Activated CD4-positive, alpha-beta T cell treated with anti-CD3 and anti-CD28 coated beads, Interleukin-2, amount 10 ng/mL, durations not matched to agents 7 days and 5 days (primary cell): ENCODE measurements at regions of chr10 and their contacts with region 1.

Region 1: DNA sequence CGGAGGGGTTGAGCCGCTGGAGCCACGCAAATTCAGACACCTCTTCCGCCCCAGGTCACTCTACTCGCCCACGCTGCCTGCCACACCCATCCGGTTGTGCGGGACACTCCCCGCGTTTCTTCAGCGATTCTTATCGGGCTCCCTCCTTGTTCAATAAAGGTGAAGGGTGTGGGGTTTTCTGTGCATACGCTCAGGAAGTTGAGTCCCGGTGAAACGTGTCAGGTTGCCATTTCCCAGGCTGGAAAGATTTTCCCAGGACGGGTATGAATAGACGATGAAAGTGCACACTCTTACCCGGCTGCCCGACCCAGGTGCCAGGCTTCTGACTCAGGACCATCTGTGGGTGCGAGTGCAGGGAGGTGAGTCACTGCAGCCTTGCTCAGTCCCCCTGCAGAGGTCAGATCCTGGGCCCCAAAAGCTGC is 22.0 kb downstream of the KLF6 start:
- DNase-seq: no peak
- H3K4me3 Mint-ChIP-seq: no peak overlapping the region
- H3K27ac Mint-ChIP-seq: no peak overlapping the region
- H3K4me1 Mint-ChIP-seq: peaks cover 83% of the 10 kb centered on the region
- H3K27me3 Mint-ChIP-seq: no peaks in the 10 kb centered on the region

Region 2: DNA sequence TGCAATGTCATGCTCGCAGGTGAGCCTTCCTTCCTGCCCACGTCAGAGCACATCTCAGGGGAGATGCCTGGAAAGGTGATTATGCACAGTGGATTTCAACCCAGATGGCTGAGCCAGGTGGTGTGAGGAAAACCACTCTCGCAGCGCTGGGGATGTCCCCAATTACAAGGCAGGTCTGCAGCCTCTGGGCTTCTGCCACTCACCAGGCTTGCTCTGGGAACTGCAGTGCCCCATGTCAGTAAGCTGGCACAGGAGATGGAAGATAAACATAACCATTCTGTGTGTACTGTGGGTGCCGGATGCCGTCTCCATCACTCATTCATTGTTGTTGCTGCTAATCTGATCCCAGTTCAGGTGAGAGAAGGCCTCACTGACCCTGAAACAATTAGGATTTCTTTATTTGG is 367.6 kb before region 1 on chr10:
- CTCF ChIA-PET with region 1: no interaction called
- POLR2A ChIA-PET with region 1: no interaction called
- DNase-seq: no peak
- H3K4me3 Mint-ChIP-seq: no peak overlapping the region
- H3K27ac Mint-ChIP-seq: no peak overlapping the region
- H3K4me1 Mint-ChIP-seq: no peaks in the 10 kb centered on the region
- H3K27me3 Mint-ChIP-seq: peaks cover 3% of the 10 kb centered on the region

Region 3: DNA sequence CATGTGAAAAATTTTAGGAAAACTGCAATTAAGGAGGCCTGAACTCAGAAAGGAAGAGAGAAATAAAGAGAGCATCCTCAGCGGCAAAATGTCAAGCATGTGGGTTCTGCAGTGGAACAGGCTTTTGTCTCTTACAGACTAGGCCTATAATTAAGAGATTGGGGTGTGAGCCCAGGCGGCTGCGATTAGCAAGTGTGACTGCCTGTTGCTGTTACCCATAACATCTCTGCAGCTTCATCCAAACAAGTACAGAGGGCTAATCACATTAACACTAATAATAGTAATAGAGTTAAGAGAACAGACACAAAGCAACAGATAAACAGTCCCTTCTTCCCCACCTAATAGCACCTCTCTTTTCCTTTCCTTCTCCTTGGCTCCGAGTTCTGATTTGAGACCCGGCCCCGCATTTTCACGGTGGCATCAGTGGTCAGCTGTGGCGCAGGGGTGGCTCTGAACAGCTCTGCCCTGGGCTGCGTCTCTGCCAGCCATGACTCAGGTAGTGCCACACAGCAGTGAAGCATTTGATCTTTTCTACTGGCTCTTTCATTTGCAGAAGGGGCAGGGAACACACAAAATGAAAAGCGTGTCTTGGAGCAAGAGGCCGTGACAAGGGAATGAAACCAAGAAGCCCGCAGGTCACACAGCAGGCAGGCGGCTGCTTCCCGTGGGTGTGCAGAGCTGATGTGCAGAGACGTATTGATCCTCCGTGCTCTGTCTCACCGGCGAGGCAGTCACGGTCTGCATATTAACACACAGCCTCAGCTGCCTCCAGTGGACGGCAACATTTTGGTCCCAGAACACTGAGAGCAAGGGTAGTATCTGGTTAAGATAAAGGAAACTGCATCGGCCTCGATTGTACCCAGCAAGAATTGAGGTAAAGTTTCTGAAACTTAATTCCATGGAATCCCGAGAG is 81.1 kb before region 1 on chr10:
- CTCF ChIA-PET with region 1: no interaction called
- POLR2A ChIA-PET with region 1: no interaction called
- DNase-seq: no peak
- H3K4me3 Mint-ChIP-seq: no peak overlapping the region
- H3K27ac Mint-ChIP-seq: no peak overlapping the region
- H3K4me1 Mint-ChIP-seq: peaks cover 9% of the 10 kb centered on the region
- H3K27me3 Mint-ChIP-seq: no peaks in the 10 kb centered on the region

Region 4: DNA sequence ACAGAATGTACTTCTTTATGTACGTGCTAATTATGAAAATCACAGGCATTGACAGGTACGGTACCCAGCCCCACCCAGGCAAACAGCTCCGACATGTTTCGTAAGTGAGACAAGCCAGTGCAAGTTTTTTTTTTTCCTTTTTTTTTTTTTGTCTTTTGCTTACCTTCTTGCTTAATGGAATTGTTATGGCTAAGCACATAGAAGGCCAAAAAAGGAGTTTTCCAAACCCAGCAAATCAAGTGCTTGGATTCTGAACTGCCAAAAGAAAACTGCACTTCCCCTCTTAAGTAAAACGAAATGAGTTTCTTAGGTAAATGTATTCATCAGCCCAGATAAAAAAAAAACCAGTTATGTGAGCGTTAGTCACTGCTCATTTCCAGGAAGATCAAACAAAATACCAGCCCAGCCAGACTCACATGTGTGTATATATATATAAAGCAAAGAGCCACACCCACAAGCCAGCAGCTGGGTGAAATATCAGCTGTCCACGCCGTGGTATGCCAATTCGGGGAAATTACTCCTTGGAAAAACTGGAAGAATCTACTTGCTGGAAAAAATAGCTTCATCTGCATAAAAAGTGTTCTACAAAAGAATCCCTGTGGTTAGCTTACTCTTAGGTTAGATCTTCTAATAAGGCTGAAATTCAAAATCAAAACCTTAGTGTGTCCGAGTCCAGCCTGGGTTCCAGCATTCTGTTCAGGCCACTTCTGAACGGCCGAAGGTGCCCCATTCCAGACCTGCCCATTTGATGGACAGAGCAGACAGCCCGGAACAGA is 13.9 kb after region 1 on chr10:
- CTCF ChIA-PET with region 1: interaction called, 11 read pairs
- POLR2A ChIA-PET with region 1: interaction called, 5 read pairs
- DNase-seq: peak; percentile 70
- H3K4me3 Mint-ChIP-seq: peak overlapping the region; percentile 53
- H3K27ac Mint-ChIP-seq: peak overlapping the region; percentile 83
- H3K4me1 Mint-ChIP-seq: peaks cover 64% of the 10 kb centered on the region
- H3K27me3 Mint-ChIP-seq: no peaks in the 10 kb centered on the region